ENCODE measurements at regions of chr17 and their contacts with region 1.

Region 1: GRCh38 chr17:50707289-50708049 is at the start of gene ANKRD40:
- DNase-seq: peak; percentile 91 to 93 (median 91)
- H3K4me3 ChIP-seq: peak within 1 kb of the TSS; percentile 66 to 81
- H3K4me3 Mint-ChIP-seq: peak within 1 kb of the TSS; percentile 90 to 97 (median 94)
- H3K27ac ChIP-seq: peak within 1 kb of the TSS; percentile 92
- H3K27ac Mint-ChIP-seq: peak within 1 kb of the TSS; percentile 96 to 99 (median 98)
- H3K4me1 ChIP-seq: peaks cover 54% of the 10 kb centered on the region
- H3K4me1 Mint-ChIP-seq: peaks cover 32 to 57% (median 42%) of the 10 kb centered on the region in 4 donors
- H3K27me3 ChIP-seq: no peaks in the 10 kb centered on the region
- H3K27me3 Mint-ChIP-seq: no peaks in the 10 kb centered on the region
- total RNA-seq, gene ANKRD40: 34.2 to 39.3 TPM

Region 2: DNA sequence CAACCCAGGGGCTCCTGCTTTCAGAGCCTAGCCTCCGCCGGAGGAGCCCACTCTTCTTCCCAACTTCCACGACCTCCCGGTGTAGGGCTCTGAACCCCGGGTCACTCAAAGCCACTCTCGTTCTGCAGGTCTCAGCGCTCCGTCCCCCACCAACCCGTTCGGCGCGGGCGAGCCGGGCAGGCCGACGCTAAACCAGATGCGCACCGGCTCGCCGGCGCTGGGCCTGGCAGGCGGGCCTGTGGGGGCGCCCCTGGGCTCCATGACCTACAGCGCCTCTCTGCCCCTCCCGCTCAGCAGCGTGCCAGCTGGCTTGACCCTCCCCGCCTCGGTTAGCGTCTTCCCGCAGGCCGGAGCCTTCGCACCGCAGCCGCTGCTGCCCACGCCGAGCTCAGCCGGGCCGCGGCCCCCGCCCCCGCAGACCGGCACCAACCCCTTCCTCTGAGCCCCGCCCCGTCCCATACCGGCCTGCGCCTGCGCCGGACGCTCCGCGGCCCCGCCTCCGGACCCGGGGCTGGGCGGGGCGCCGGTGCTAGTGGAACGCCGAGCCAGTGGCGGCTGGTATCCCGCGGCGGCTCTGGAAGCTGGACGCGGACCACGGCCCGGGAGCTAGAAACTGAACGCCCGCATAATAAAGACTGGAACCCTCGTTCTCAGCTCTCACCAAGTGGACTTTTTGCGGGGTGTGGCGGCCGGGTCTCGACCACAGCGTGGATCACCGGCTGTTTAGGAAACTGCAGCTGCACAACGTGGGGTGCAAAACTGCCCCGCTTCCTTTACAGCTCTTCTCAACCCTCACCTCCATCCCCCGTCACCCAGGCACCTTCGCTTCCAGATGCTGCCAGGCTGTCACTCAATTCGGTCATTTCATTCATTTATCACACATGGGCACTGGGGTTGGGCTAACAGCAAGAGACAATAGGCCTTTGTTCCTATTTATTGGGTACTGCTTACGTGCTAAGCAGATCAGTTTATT is 165.5 kb before region 1 on chr17:
- CTCF ChIA-PET with region 1: no interaction called
- POLR2A ChIA-PET with region 1: no interaction called
- intact Hi-C with region 1: loop called (anchors 5 kb)
- DNase-seq: peak; percentile 74 to 86 (median 81)
- H3K4me3 ChIP-seq: peak overlapping the region; percentile 45 to 51
- H3K4me3 Mint-ChIP-seq: peak overlapping the region; percentile 80 to 89 (median 86)
- H3K27ac ChIP-seq: peak overlapping the region; percentile 60
- H3K27ac Mint-ChIP-seq: peak overlapping the region; percentile 17 to 93 (median 77)
- H3K4me1 ChIP-seq: peaks cover 18% of the 10 kb centered on the region
- H3K4me1 Mint-ChIP-seq: peaks cover 8 to 24% (median 18%) of the 10 kb centered on the region in 4 donors
- H3K27me3 ChIP-seq: no peaks in the 10 kb centered on the region
- H3K27me3 Mint-ChIP-seq: peaks cover 1 to 3% of the 10 kb centered on the region in 2 donors

Region 3: GRCh38 chr17:50719144-50719923 is 11.9 kb after region 1 on chr17 and contains the start of gene LUC7L3:
- CTCF ChIA-PET with region 1: interaction called, 6 read pairs
- POLR2A ChIA-PET with region 1: interaction called, 116 read pairs
- intact Hi-C with region 1: loop called (anchors 1 kb)
- DNase-seq: peak; percentile 91 to 96 (median 93)
- H3K4me3 ChIP-seq: peak within 1 kb of the TSS; percentile 55 to 100
- H3K4me3 Mint-ChIP-seq: peak within 1 kb of the TSS; percentile 86 to 99 (median 98)
- H3K27ac ChIP-seq: peak within 1 kb of the TSS; percentile 97
- H3K27ac Mint-ChIP-seq: peak within 1 kb of the TSS; percentile 78 to 99 (median 99)
- H3K4me1 ChIP-seq: peaks cover 42% of the 10 kb centered on the region
- H3K4me1 Mint-ChIP-seq: peaks cover 17 to 44% (median 32%) of the 10 kb centered on the region in 4 donors
- H3K27me3 ChIP-seq: no peaks in the 10 kb centered on the region
- H3K27me3 Mint-ChIP-seq: no peaks in the 10 kb centered on the region
- total RNA-seq, gene LUC7L3: 254 to 291 TPM

Region 4: DNA sequence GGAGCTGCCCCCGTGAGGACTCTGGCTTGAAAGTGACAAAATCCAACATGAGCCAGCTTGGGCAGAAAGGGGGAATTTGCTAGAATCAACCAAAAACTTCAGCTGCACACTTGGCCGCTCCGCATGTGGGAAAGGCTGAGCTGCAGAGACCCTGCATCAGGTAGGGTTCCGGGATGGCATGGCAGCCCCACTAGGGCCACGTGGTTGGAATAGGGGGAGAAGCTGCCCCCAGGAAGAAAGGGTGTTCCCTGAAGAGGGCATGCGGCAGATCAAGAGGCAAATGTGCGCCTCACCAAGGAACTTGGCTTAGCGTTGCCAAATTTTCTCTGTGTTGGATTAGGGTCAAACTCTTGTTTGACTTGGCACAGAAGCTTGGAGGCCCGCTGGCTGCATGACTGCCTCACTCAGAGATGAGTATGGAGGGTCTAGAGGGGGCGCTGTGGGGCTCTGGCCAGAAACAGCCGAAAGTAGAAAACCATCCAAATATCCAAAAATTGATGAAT is 98.7 kb after region 1 on chr17:
- CTCF ChIA-PET with region 1: no interaction called
- POLR2A ChIA-PET with region 1: no interaction called
- intact Hi-C with region 1: no loop called
- DNase-seq: no peak
- H3K4me3 ChIP-seq: no peak overlapping the region
- H3K4me3 Mint-ChIP-seq: no peak overlapping the region
- H3K27ac ChIP-seq: no peak overlapping the region
- H3K27ac Mint-ChIP-seq: no peak overlapping the region
- H3K4me1 ChIP-seq: no peaks in the 10 kb centered on the region
- H3K4me1 Mint-ChIP-seq: no peaks in the 10 kb centered on the region
- H3K27me3 ChIP-seq: no peaks in the 10 kb centered on the region
- H3K27me3 Mint-ChIP-seq: no peaks in the 10 kb centered on the region

Region 5: DNA sequence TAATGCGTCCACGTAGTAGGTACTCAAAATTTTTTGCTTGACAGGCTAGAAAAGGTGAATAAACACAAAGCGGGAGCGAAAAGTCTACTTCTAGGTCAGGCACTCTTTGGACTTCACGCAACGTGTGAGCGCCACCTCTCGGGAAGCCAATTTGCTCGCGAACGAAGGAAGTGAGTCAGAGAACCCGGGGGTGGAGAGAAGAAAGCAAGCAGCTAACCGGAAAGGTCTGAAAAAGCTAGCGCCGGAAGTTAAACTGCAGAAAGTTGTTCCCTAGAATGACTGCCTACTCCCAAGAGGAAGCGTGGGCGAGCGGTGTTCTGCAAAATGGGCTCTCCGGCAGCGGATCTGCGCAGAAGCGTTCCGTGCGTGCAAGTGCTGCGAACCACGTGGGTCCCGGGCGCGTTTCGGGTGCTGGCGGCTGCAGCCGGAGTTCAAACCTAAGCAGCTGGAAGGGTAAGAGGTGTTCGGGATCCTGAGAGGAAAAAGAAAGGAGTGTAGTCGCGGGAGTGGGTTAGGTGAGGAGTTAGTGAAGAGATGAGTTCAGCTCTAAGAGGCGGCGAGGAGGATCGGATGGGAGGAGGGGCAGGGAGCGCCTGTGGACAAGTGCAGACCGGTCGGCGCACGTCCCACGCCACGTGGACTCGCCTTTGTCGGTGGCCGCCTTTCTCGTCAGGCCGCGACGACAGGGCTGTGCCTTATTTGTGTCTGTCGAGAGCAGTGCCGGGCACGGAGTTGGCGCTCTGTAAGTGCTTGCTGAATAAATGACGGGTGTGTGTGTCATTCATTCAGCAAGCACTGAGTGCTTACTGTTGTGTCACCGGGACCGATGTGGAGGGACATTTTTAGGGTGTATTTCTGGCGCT is 446.0 kb after region 1 on chr17 and contains the start of gene NME1:
- CTCF ChIA-PET with region 1: no interaction called
- POLR2A ChIA-PET with region 1: no interaction called
- intact Hi-C with region 1: loop called (anchors 1 kb)
- DNase-seq: peak; percentile 98 to 99 (median 98)
- H3K4me3 ChIP-seq: peak within 1 kb of the TSS; percentile 77 to 85
- H3K4me3 Mint-ChIP-seq: no peak within 1 kb of the TSS
- H3K27ac ChIP-seq: peak within 1 kb of the TSS; percentile 61
- H3K27ac Mint-ChIP-seq: no peak within 1 kb of the TSS
- H3K4me1 ChIP-seq: peaks cover 21% of the 10 kb centered on the region
- H3K4me1 Mint-ChIP-seq: peaks cover 0 to 7% (median 2%) of the 10 kb centered on the region in 4 donors
- H3K27me3 ChIP-seq: no peaks in the 10 kb centered on the region
- H3K27me3 Mint-ChIP-seq: peaks cover 0 to 1% of the 10 kb centered on the region in 2 donors
- total RNA-seq, gene NME1: 10.0 to 12.2 TPM